HepG2 (cell line): ENCODE measurements at regions of chr16 and their contacts with region 1.

Region 1: GRCh38 chr16:69894676-69895075 is 56.5 kb upstream of the CLEC18A start:
- DNase-seq: no peak
- ATAC-seq: no peak
- H3K4me3 ChIP-seq: no peak overlapping the region
- H3K27ac ChIP-seq: no peak overlapping the region
- H3K4me1 ChIP-seq: no peaks in the 10 kb centered on the region
- H3K27me3 ChIP-seq: no peaks in the 10 kb centered on the region
- CTCF ChIP-seq: no peak
- EP300 ChIP-seq: no peak
- POLR2A ChIP-seq: no peak
- RAD21 ChIP-seq: no peak

Region 2: DNA sequence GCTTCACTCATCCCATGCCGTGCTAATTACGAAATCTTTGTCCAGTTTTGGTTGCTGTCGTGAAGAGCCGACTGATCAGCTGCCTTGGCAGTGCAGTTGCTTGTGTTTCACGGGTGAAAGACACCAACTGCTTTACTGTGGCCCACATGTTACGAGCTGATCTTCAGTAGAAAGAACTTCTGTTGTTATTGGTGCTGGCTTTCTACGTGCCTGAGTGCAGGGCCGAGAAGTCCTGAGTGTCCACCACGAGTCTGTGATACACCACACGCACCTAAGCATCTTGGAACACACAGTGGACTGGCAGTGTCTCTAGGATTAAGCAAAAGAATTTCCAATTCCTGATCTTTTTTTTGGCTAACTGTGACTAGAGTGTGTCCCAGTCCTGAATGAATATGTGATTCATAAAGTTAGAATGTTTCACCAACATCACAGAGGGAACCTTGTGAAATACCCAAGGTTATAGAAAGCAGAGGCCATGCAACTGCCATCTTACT is 14.0 kb before region 1 on chr16:
- CTCF ChIA-PET with region 1: no interaction called
- POLR2A ChIA-PET with region 1: no interaction called
- in situ Hi-C with region 1: no loop called
- intact Hi-C with region 1: loop called (anchors 1 kb)
- DNase-seq: no peak
- ATAC-seq: no peak
- H3K4me3 ChIP-seq: no peak overlapping the region
- H3K27ac ChIP-seq: no peak overlapping the region
- H3K4me1 ChIP-seq: no peaks in the 10 kb centered on the region
- H3K27me3 ChIP-seq: no peaks in the 10 kb centered on the region
- CTCF ChIP-seq: no peak
- EP300 ChIP-seq: no peak
- POLR2A ChIP-seq: no peak
- RAD21 ChIP-seq: no peak

Region 3: GRCh38 chr16:69930117-69930776 is 35.6 kb after region 1 on chr16:
- CTCF ChIA-PET with region 1: no interaction called
- POLR2A ChIA-PET with region 1: no interaction called
- in situ Hi-C with region 1: no loop called
- intact Hi-C with region 1: no loop called
- DNase-seq: peak; percentile 76
- ATAC-seq: peak; percentile 92
- H3K4me3 ChIP-seq: no peak overlapping the region
- H3K27ac ChIP-seq: no peak overlapping the region
- H3K4me1 ChIP-seq: peaks cover 30% of the 10 kb centered on the region
- H3K27me3 ChIP-seq: no peaks in the 10 kb centered on the region
- CTCF ChIP-seq: peak; percentile 94
- EP300 ChIP-seq: no peak
- POLR2A ChIP-seq: no peak
- RAD21 ChIP-seq: peak; percentile 92